ENCODE measurements at regions of chr1 and their contacts with region 1.

Region 1: DNA sequence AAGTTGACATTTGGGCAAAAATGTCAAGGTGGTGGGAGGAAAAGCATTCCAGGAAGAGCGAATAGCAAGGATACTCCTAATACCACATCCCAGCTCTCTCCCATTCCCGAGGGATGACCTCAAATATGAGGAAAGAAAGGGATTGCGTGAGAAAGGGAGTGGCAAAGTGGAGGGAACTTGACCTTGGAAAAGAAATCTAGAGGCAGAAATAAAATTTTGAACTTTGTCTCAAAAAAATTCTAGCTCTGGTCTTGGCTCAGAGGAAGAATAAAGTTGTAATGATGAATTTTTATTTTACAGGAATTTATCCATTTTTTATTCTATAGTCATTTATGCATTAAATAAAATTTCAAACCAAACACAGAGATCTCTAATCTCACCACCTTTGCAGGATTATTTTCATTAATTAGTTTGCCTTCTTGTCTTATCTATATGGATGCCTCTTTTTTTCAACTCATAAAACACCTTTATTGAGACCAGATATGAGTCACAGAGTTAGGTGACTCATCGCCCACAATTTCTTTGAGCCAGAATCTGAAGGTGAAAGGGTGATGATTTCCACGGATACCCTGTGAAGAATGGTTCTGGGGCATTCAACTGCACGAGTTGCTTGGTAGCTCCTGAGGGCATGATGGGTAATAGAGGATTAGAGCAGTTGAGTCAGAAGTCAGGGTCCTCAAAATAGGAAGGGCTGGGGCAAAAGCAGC is 128.0 kb downstream of the TBX19 start:
- DNase-seq: peak in 2 of 9 donors; percentile 21 to 53
- ATAC-seq: peak; percentile 64
- H3K4me3 ChIP-seq: peak overlapping the region; percentile 7
- H3K4me3 Mint-ChIP-seq: peak overlapping the region in 9 of 10 donors; percentile 30 to 80 (median 60)
- H3K27ac ChIP-seq: no peak overlapping the region
- H3K27ac Mint-ChIP-seq: peak overlapping the region; percentile 5 to 85 (median 65)
- H3K4me1 ChIP-seq: peaks cover 11 to 31% of the 10 kb centered on the region in 2 donors
- H3K4me1 Mint-ChIP-seq: peaks cover 17 to 50% (median 34%) of the 10 kb centered on the region in 7 donors
- H3K27me3 ChIP-seq: no peaks in the 10 kb centered on the region
- H3K27me3 Mint-ChIP-seq: no peaks in the 10 kb centered on the region

Region 2: GRCh38 chr1:168225476-168226190 is 183.1 kb before region 1 on chr1 and contains the start of gene SFT2D2:
- CTCF ChIA-PET with region 1: no interaction called
- POLR2A ChIA-PET with region 1: no interaction called
- intact Hi-C with region 1: loop called in 1 of 2 experiments (anchors 10 kb)
- DNase-seq: peak; percentile 71 to 86 (median 83)
- ATAC-seq: peak; percentile 97
- H3K4me3 ChIP-seq: peak within 1 kb of the TSS; percentile 88
- H3K4me3 Mint-ChIP-seq: peak within 1 kb of the TSS; percentile 92 to 98 (median 96)
- H3K27ac ChIP-seq: peak within 1 kb of the TSS; percentile 85
- H3K27ac Mint-ChIP-seq: peak within 1 kb of the TSS; percentile 81 to 98 (median 92)
- H3K4me1 ChIP-seq: peaks cover 14 to 15% of the 10 kb centered on the region in 2 donors
- H3K4me1 Mint-ChIP-seq: peaks cover 30 to 56% (median 45%) of the 10 kb centered on the region in 7 donors
- H3K27me3 ChIP-seq: no peaks in the 10 kb centered on the region
- H3K27me3 Mint-ChIP-seq: peaks cover 0 to 7% (median 4%) of the 10 kb centered on the region in 5 donors
- total RNA-seq, gene SFT2D2: 46.9 to 79.8 (median 51.3) TPM

Region 3: GRCh38 chr1:168348146-168348709 is 60.5 kb before region 1 on chr1:
- CTCF ChIA-PET with region 1: no interaction called
- POLR2A ChIA-PET with region 1: no interaction called
- intact Hi-C with region 1: loop called (anchors 2 kb)
- DNase-seq: peak in 7 of 9 donors; percentile 15 to 52 (median 47)
- ATAC-seq: peak; percentile 45
- H3K4me3 ChIP-seq: peak overlapping the region; percentile 85
- H3K4me3 Mint-ChIP-seq: peak overlapping the region; percentile 74 to 97 (median 91)
- H3K27ac ChIP-seq: peak overlapping the region; percentile 62
- H3K27ac Mint-ChIP-seq: peak overlapping the region; percentile 90 to 95 (median 92)
- H3K4me1 ChIP-seq: peaks cover 0 to 3% of the 10 kb centered on the region in 2 donors
- H3K4me1 Mint-ChIP-seq: peaks cover 5 to 39% (median 31%) of the 10 kb centered on the region in 7 donors
- H3K27me3 ChIP-seq: no peaks in the 10 kb centered on the region
- H3K27me3 Mint-ChIP-seq: no peaks in the 10 kb centered on the region

Region 4: GRCh38 chr1:168373869-168374268 is 34.8 kb before region 1 on chr1:
- CTCF ChIA-PET with region 1: no interaction called
- POLR2A ChIA-PET with region 1: no interaction called
- intact Hi-C with region 1: no loop called
- DNase-seq: no peak
- ATAC-seq: no peak
- H3K4me3 ChIP-seq: no peak overlapping the region
- H3K4me3 Mint-ChIP-seq: no peak overlapping the region
- H3K27ac ChIP-seq: no peak overlapping the region
- H3K27ac Mint-ChIP-seq: no peak overlapping the region
- H3K4me1 ChIP-seq: no peaks in the 10 kb centered on the region
- H3K4me1 Mint-ChIP-seq: peaks cover 0 to 1% (median 0%) of the 10 kb centered on the region in 7 donors
- H3K27me3 ChIP-seq: no peaks in the 10 kb centered on the region
- H3K27me3 Mint-ChIP-seq: peaks cover 0 to 15% (median 0%) of the 10 kb centered on the region in 5 donors

Region 5: DNA sequence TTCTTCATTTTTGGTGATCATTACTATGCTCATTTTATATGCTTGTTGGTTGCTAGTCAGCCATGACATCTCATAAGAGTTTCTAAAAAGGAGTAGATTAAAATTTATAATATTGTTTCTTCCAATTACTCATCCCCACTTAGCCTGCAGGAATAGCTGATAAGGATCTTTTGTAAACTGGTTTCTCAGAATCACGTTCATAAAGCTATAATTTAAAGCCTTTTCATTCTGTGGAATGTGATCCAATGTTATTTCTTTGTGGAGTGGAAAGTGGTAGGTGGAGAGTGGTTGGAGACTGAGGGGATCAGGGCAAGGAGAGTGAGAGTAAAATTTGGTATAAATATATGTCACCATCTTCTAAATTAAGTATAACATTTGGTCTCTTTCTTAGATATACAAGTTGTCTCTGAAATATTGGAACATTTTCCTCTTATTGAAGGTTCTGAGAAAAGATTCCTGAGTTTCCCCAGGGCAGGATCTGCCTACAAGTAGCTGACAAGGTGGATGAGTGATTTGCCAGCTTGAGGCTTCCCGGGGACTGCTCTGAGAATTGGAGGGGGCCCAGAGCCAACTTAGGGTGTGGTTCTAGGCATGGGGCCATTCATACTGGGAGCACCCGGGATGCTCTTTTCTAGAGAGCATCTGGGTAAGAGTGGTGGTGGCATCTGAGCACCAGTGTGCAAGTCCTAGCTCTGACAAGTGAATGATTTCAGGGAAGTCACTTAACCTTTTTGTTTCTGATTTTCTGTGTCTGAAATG is 11.6 kb before region 1 on chr1:
- CTCF ChIA-PET with region 1: interaction called, 5 read pairs
- POLR2A ChIA-PET with region 1: no interaction called
- intact Hi-C with region 1: loop called in 1 of 2 experiments (anchors 1 kb)
- DNase-seq: no peak
- ATAC-seq: no peak
- H3K4me3 ChIP-seq: no peak overlapping the region
- H3K4me3 Mint-ChIP-seq: no peak overlapping the region
- H3K27ac ChIP-seq: no peak overlapping the region
- H3K27ac Mint-ChIP-seq: no peak overlapping the region
- H3K4me1 ChIP-seq: peaks cover 0 to 11% of the 10 kb centered on the region in 2 donors
- H3K4me1 Mint-ChIP-seq: peaks cover 0 to 28% (median 0%) of the 10 kb centered on the region in 7 donors
- H3K27me3 ChIP-seq: no peaks in the 10 kb centered on the region
- H3K27me3 Mint-ChIP-seq: peaks cover 5 to 32% (median 10%) of the 10 kb centered on the region in 5 donors

Region 6: GRCh38 chr1:168466092-168466713 is 57.5 kb after region 1 on chr1:
- CTCF ChIA-PET with region 1: no interaction called
- POLR2A ChIA-PET with region 1: no interaction called
- intact Hi-C with region 1: loop called in 1 of 2 experiments (anchors 5 kb)
- DNase-seq: peak in 4 of 9 donors; percentile 29 to 39 (median 32)
- ATAC-seq: peak; percentile 54
- H3K4me3 ChIP-seq: no peak overlapping the region
- H3K4me3 Mint-ChIP-seq: peak overlapping the region; percentile 44 to 72 (median 56)
- H3K27ac ChIP-seq: no peak overlapping the region
- H3K27ac Mint-ChIP-seq: peak overlapping the region; percentile 66 to 89 (median 80)
- H3K4me1 ChIP-seq: peaks cover 40 to 51% of the 10 kb centered on the region in 2 donors
- H3K4me1 Mint-ChIP-seq: peaks cover 47 to 66% (median 60%) of the 10 kb centered on the region in 7 donors
- H3K27me3 ChIP-seq: no peaks in the 10 kb centered on the region
- H3K27me3 Mint-ChIP-seq: no peaks in the 10 kb centered on the region

Measured in naive thymus-derived CD4-positive, alpha-beta T cell (primary cell).